Mucosa of descending colon (tissue), 3 donors: ENCODE measurements at regions of chr20 and their contacts with region 1.

Region 1: DNA sequence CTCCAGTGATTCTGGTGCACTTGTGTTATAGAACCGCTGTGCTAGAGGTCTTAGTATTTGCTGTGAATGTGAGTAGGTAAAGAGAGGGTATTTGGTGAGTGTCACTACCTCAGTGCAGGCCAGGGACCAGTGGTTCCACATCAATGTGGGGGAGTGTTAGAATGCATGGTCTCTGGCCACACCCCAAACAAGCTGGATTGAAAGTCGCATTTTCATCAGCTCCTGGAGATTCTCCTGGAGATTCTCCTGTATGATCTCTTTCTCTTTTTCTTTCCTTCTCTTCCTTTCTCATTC is 26.8 kb upstream of the BCAS1 start:
- DNase-seq: no peak
- ATAC-seq: no peak
- H3K4me3 ChIP-seq: no peak overlapping the region
- H3K4me1 ChIP-seq: no peaks in the 10 kb centered on the region
- CTCF ChIP-seq: no peak

Region 2: DNA sequence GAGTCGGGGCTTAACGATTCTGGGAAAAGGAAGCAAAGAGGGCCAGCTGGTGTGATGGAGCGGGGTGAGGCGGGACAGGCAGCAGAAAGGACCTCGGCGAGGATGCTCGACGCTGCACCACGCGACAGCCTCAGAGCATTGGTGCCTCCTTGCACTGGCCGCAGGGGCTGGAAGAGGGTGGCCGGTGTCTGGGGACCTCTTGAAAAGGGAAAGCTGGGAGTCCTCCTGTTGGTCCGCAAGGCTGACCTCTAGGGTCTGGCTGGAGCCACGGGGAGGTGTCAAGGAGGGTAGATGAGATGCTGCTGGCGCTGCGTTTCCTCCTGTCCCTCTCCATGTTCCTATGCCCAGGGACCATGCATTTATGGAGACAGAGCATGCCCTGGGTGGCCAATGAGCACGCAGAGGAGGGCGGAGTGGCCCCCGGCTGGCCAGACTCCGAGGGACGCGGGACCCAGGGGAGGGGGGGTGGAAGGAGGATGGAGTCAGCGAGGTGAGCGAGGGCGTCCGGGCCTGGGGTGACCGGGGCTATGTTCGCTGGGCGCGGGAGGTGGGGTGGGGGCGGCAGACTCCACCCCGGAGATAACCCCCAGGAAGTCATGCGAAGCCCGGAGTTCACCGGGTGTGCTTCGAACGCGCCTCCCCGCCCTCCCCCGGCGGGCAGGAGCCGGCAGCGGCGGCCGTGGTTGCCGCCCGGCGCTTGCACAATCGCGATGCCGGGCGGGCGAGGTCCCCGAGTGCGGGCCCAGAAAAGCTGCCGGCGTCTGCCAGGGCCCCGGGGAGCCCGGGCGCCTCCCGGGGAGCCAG is 76.7 kb after region 1 on chr20 and contains the start of gene CYP24A1:
- intact Hi-C with region 1: no loop called
- DNase-seq: peak in 1 of 3 donors; percentile 50
- ATAC-seq: peak; percentile 72
- H3K4me3 ChIP-seq: no peak within 1 kb of the TSS
- H3K4me1 ChIP-seq: peaks cover 13% of the 10 kb centered on the region
- CTCF ChIP-seq: no peak
- total RNA-seq, gene CYP24A1: not detected

Region 3: GRCh38 chr20:54199721-54200176 is 102.6 kb after region 1 on chr20:
- intact Hi-C with region 1: loop called (anchors 2 to 5 kb)
- DNase-seq: peak; percentile 70 to 91 (median 88)
- ATAC-seq: peak; percentile 71
- H3K4me3 ChIP-seq: no peak overlapping the region
- H3K4me1 ChIP-seq: peaks cover 15% of the 10 kb centered on the region
- CTCF ChIP-seq: peak; percentile 81